Activated naive CD4-positive, alpha-beta T cell treated with anti-CD3 and anti-CD28 coated beads, Interleukin-2, amount 10 ng/mL, durations not matched to agents 7 days and 5 days (primary cell): ENCODE measurements at regions of chr1 and their contacts with region 1.

Region 1: DNA sequence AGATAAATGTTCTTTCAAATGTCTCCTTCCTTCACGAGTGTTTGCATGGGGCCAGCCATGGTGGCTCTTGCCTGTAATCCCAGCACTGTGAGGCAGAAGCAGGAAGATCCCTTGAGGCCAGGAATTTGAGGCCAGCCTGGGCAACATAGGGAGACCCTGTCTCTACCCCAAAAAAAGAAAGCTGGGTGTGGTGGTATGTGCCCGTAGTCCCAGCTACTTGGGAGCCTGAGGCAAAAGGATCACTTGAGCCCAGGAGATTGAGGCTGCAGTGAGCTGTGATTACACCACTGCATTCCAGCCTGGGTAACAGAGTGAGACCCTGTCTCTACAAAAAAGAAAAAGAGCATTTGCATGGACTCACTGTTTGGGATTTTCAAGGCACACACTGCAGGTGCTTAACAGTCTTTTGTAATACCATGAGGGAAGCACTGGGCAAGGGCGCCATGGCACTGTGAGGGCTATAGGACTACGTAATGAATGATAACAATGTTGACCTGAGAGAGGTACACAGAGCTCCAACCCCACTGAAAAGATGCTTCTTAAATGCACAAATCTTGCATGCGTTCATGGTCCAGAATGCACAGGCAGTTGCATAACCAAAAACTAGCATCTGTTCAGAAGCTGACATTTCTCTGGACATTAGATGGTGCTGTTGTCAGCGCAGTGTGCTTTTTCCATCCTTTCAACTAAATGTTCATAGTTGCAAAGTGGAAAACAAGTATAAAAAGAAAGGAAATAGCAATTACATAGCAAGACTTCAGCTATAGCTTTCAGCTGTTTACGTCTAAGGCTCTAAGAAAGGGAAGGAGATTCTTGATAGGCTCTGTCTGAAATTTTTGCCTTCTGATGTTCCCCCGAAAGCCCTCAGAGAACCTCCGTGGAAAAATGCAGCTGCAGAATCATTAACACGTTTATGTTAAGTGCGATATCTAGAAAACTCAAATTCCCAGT is 7.8 kb upstream of the TARBP1 start:
- DNase-seq: peak; percentile 60
- H3K4me3 Mint-ChIP-seq: no peak overlapping the region
- H3K27ac Mint-ChIP-seq: peak overlapping the region; percentile 70
- H3K4me1 Mint-ChIP-seq: peaks cover 35% of the 10 kb centered on the region
- H3K27me3 Mint-ChIP-seq: peaks cover 29% of the 10 kb centered on the region

Region 2: GRCh38 chr1:234326497-234327366 is 160.0 kb before region 1 on chr1:
- CTCF ChIA-PET with region 1: no interaction called
- DNase-seq: peak; percentile 78
- H3K4me3 Mint-ChIP-seq: peak overlapping the region; percentile 75
- H3K27ac Mint-ChIP-seq: peak overlapping the region; percentile 58
- H3K4me1 Mint-ChIP-seq: peaks cover 29% of the 10 kb centered on the region
- H3K27me3 Mint-ChIP-seq: peaks cover 29% of the 10 kb centered on the region

Region 3: GRCh38 chr1:234599617-234600417 is 113.0 kb after region 1 on chr1:
- CTCF ChIA-PET with region 1: interaction called, 10 read pairs
- DNase-seq: peak; percentile 81
- H3K4me3 Mint-ChIP-seq: peak overlapping the region; percentile 82
- H3K27ac Mint-ChIP-seq: peak overlapping the region; percentile 98
- H3K4me1 Mint-ChIP-seq: peaks cover 63% of the 10 kb centered on the region
- H3K27me3 Mint-ChIP-seq: no peaks in the 10 kb centered on the region

Region 4: DNA sequence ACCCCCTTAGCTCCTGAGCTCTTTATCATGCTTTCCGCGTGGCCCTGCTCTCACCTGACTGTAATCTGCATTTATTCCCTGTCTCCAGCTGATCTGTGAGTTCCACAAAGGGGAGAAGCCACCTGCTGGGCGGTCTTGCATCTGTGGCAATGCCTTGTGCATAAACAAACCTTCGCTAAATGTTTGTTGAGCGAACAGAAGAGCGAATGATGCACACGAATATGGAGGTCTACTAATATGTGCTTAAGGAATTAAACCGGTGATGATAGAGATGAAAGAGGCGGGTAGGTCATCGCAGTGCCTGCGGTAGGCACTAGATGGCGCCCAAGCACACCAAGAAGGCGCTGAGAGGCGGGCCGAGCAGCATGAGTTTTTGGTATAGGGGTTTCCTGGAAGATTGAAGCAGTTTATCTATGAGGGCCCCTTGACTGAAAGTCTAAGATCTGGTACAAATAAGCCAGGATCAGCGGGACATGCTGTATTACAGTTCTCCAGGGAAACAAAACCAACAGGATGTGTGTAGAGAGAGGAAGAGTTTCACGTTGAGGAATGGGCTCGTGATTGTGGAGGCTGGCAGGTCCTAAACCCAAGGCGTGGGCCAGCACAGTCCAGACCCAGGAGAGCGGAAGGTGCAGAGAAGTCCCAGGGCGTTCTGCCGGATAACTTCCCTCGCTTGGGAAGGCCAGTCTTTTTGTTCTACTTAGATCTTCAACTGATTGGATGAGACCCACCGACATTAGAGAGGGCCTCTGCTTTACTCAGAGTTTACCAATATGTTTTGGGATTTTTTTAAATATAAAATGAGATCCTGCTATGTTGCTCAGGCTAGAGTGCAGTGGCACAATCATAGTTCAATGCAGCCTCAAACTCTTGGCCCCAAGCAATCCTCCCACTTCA is 607.2 kb after region 1 on chr1:
- CTCF ChIA-PET with region 1: interaction called, 18 read pairs
- DNase-seq: peak; percentile 88
- H3K4me3 Mint-ChIP-seq: no peak overlapping the region
- H3K27ac Mint-ChIP-seq: no peak overlapping the region
- H3K4me1 Mint-ChIP-seq: peaks cover 7% of the 10 kb centered on the region
- H3K27me3 Mint-ChIP-seq: peaks cover 39% of the 10 kb centered on the region

Region 5: DNA sequence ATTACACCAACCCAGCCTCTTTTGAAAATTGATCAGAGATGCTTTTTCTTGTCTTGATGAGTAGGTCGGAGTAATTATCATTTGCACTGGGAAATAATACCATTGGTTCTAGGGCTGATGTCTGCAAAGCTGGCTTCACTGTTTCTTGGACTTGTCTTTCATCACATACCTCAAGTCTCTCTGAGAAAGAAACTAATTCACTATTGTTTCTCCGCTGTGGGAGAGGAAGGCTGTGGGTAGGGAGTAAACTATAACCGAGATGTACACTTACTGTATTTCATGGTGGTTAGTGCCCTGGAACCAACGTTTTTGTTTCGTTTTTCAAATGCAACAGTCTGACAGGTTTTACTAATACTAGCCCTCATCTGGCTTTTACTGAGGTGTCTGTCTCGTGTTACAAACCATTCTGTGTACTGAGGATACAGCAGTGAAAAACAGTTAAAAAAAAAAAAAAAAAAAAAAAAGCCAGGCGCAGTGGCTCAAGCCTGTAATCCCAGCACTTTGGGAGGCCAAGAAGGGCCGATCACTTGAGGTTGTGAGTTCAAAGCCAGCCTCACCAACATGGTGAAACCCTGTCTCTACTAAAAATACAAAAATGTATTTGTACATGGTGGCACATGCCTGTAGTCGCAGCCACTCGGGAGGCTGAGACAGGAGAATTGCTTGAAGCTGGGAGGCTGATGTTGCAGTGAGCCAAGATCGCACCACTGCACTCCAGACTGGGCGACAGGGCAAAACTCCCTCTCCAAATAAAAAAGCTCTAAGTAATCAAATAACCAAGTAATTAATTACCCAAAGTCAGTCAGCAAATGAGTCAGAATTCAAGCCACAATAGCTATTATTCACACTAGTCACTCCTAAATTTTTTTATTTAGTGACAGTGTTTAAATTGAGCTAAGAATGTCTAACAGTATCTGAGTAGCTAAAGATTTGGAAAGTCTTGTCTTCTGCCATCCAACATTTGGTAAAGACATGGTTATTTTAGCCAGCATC is 618.6 kb after region 1 on chr1:
- CTCF ChIA-PET with region 1: interaction called, 22 read pairs
- DNase-seq: peak; percentile 18
- H3K4me3 Mint-ChIP-seq: no peak overlapping the region
- H3K27ac Mint-ChIP-seq: peak overlapping the region; percentile 82
- H3K4me1 Mint-ChIP-seq: peaks cover 46% of the 10 kb centered on the region
- H3K27me3 Mint-ChIP-seq: peaks cover 17% of the 10 kb centered on the region